AG04449 (cell line): ENCODE measurements at regions of chr4 and their contacts with region 1.

Region 1: DNA sequence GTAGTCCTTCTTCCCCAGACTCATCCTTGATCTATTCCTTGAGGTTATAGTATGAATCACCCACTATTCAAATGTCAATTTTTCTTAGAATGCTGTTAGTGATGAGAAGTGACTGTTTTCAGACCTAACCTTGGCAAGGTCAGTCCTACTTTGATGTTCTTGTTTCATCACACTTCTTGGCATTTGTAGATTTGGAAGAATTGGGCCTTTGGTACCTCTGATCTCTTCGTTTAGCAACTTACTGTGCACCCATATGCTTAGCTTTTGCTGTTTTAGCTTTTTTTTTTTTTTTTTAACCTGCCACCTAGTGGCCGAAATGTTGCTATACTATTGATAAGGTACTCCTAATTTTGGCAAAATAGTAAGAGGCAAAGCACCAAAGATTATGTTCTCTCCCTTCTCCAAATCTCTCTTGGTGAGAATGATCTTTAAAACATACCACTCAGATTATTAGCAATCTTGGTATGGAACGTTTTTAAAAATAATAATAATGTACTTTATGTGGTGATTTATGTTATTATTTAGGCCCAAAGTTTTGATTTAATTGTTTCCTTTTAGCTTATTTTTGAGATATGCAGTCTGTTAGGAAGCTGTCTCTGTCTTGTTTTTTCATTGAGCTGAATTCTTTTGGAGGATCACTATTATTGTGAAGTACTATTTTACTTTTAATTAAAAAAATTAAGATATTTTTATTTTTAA is 16.6 kb downstream of the DCK start:
- DNase-seq: no peak
- H3K4me3 ChIP-seq: no peak overlapping the region
- CTCF ChIP-seq: peak; percentile 26

Region 2: DNA sequence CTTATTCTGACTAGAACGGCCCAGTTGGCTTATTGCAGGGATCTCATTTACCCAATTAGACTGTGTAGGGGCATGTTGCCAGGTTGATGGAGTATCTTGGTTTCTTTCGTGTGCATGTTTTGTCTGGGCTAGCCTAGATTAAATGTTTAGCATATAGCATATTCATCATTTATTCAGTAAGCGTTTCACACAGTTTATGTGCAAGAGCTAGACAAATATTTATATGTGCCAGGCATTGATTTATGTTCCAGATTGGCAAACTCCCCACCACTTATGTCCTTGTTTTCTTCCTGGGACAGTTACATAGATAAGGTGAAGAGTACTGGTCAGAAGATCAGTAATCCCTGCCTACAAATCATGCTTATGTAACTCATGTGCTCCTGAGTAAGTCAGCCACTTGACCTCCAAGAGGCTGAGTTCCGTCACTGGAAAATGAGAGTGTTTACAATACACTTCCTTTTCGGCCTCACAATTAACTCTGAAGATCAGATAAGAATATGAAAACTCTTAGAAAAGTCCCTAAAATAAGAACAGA is 231.1 kb before region 1 on chr4:
- CTCF ChIA-PET with region 1: no interaction called
- POLR2A ChIA-PET with region 1: no interaction called
- DNase-seq: no peak
- H3K4me3 ChIP-seq: no peak overlapping the region
- CTCF ChIP-seq: no peak

Region 3: GRCh38 chr4:70801265-70801809 is 208.7 kb before region 1 on chr4:
- CTCF ChIA-PET with region 1: no interaction called
- POLR2A ChIA-PET with region 1: no interaction called
- DNase-seq: no peak
- H3K4me3 ChIP-seq: no peak overlapping the region
- CTCF ChIP-seq: no peak

Region 4: GRCh38 chr4:70901984-70902576 is 108.0 kb before region 1 on chr4 and contains the start of gene MOB1B:
- CTCF ChIA-PET with region 1: interaction called, 14 read pairs
- POLR2A ChIA-PET with region 1: no interaction called
- DNase-seq: peak; percentile 31
- H3K4me3 ChIP-seq: peak within 1 kb of the TSS; percentile 86
- CTCF ChIP-seq: peak; percentile 47

Region 5: GRCh38 chr4:70993181-70994068 is 16.6 kb before region 1 on chr4 and contains the start of gene DCK:
- CTCF ChIA-PET with region 1: interaction called, 80 read pairs
- POLR2A ChIA-PET with region 1: no interaction called
- DNase-seq: no peak
- H3K4me3 ChIP-seq: peak within 1 kb of the TSS; percentile 90
- CTCF ChIP-seq: no peak

Region 6: DNA sequence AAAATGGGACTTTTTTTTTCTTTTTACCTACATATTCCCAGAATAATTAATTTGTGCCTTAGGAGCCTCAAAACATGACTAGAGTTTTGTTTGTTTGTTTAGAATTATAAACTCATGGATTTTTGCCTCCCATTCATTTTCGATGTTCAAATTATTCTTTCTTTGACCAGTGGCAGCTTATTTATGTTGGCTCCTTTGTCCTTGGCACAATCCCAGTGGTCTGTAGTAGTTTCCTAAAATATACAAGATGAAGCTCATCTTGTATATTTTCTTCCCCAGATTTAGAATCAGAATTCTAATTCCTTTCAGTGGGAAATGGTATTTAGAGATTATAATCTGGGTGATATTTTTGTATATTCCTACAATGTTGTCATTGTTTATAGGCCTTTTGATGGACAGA is 10.6 kb after region 1 on chr4:
- CTCF ChIA-PET with region 1: interaction called, 52 read pairs
- POLR2A ChIA-PET with region 1: no interaction called
- DNase-seq: no peak
- H3K4me3 ChIP-seq: no peak overlapping the region
- CTCF ChIP-seq: no peak

Region 7: DNA sequence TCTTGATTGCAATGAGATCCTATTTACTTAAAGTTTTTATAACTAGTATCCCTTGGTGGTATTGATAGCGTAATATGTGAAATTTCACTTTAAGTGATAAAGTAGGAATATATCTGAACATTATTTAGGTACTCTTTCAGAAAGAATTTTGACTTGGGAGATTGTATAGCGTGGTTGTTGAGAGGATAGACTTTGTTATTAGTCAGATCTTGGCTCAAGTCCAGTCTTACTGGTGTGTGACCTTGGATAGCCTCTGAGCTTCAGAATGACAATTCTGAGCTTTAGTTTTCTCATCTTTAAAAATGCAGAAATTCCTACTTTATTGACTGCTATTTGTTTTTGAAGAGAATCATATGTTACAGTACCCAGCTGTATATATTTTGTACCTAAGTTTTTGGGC is 16.0 kb after region 1 on chr4:
- CTCF ChIA-PET with region 1: interaction called, 52 read pairs
- POLR2A ChIA-PET with region 1: no interaction called
- DNase-seq: no peak
- H3K4me3 ChIP-seq: no peak overlapping the region
- CTCF ChIP-seq: no peak

Region 8: DNA sequence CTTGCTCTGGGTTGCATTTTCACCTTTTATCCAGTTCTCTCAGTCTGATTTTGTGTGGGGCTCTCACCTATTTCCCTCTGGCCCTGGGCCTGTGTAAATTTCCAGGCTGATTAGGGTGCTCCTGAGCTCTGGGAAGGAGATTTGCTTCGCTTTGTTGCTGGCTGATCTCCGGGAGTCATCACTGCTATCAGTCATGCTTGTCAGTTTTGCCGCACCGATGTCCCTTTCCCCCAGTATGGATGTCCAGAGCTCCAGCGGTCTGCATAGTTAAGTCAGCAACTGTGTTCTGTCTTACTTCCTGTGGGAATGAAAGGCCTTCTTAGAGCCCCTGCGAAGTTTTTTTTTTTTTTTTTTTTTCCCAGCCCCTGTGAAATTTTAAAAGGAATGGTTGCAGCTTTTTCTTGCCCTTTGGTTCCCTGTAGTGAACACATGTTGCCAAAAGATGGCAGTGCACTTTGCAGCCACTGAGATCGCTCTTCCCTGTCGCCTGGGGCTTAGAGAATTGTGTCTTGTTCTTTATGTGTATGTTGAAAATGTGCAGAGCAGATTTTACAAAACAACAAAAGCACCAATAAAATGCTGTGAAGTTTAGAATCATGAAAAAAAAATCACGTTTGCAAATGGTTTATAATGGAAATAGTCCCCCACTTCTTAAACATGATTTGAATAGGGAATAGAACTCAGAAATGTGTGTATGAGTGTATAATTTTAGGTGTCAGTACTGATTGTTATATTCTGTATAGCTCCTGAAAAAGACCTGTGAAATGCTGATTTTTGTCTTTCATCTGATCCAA is 219.6 kb after region 1 on chr4:
- CTCF ChIA-PET with region 1: no interaction called
- POLR2A ChIA-PET with region 1: no interaction called
- DNase-seq: no peak
- H3K4me3 ChIP-seq: no peak overlapping the region; the same call in 1 of the 2 replicates
- CTCF ChIP-seq: peak; percentile 76